ENCODE measurements at regions of chr11 and their contacts with region 1.

Region 1: DNA sequence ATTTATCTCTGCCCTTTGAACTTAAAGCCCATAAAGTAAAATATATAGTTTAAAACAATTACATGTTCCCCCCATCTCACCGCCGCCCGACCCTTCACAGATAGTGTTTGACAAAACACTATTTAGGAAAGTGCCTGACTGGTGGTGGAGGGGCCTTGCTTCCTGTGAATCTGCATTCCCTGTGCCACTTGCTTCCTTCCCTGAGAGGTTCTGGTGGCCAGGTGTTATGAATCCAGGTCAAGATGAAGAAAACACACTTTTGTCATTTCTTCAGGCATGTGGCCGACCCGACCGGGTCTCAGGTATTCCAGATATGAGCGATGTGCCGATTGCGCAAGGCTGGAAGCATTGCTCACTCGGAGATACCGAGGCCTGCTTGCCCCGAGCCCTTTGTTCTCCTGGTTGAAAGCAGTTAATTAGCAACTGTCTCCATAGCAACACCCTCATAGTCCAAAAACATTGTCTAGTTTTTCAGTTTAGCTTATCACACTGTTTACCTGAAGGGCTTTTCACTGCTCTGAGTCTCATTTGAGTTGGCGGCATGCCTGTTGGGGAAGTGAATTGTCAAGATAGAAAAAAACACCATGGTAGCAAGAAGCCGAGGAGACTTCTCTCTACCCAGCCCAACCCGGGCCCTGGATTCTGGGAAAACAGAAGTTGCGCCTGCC is 128.3 kb downstream of the TEAD1 start:
- DNase-seq: peak; percentile 54 to 82
- H3K4me3 ChIP-seq: no peak overlapping the region
- H3K27ac ChIP-seq: peak overlapping the region; percentile 46 to 55
- H3K4me1 ChIP-seq: peaks cover 0 to 6% of the 10 kb centered on the region in 2 donors
- H3K27me3 ChIP-seq: no peaks in the 10 kb centered on the region
- CTCF ChIP-seq: no peak
- POLR2A ChIP-seq: no peak

Region 2: DNA sequence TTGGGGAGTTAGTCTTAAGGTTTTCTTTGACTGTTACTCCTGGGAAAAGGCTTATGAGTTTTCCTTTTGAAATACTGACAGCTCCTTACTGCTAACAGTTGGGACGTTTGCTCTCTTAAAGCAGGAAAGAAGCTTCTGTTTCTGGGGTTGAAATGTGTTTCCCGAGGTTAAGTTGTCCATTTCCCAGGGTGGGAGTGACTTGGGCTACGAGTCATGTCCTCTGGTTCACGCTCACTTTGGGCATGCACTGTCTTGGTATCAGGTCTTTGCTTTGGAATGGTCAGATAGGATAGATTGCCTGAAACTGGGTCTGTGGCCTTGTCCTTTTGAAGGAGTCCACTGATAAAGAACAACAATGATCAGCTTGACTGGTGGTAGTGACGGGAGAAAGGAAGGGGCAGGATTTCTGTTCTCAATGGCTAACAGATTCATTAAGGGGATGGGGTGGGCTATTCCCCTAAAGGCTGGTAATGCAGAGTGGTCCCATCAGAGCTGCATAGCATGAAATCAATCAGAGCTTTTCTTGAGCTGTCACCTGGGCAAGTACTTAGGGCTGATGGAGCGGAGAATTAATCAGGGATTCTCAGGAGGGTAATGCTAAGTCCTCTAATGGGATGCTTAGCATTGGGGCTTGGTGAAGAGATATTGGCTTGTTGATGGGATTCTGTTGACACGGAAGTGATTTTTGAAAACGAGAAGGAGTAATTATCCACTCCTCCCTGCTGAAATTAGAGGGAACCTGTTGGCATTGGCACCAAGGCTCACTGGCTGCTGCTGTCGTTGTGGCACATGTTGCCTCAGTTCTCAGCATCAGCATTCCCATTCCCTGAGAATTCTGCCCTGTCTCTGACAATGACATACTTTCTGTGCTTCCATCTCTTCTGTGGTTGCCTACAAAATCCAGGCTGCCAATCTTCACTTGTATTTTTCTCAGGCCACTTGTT is 46.8 kb before region 1 on chr11:
- intact Hi-C with region 1: loop called (anchors 10 kb)
- DNase-seq: no peak
- H3K4me3 ChIP-seq: no peak overlapping the region
- H3K27ac ChIP-seq: no peak overlapping the region
- H3K4me1 ChIP-seq: peaks cover 0 to 4% of the 10 kb centered on the region in 2 donors
- H3K27me3 ChIP-seq: no peaks in the 10 kb centered on the region
- CTCF ChIP-seq: no peak
- POLR2A ChIP-seq: no peak

Region 3: GRCh38 chr11:12841946-12842630 is 39.5 kb after region 1 on chr11:
- intact Hi-C with region 1: no loop called
- DNase-seq: peak; percentile 46 to 58
- H3K4me3 ChIP-seq: no peak overlapping the region
- H3K27ac ChIP-seq: peak overlapping the region; percentile 7 to 66
- H3K4me1 ChIP-seq: peaks cover 0 to 7% of the 10 kb centered on the region in 2 donors
- H3K27me3 ChIP-seq: no peaks in the 10 kb centered on the region
- CTCF ChIP-seq: no peak
- POLR2A ChIP-seq: no peak

Region 4: GRCh38 chr11:13247606-13248296 is 445.2 kb after region 1 on chr11:
- intact Hi-C with region 1: no loop called
- DNase-seq: no peak
- H3K4me3 ChIP-seq: no peak overlapping the region
- H3K27ac ChIP-seq: no peak overlapping the region
- H3K4me1 ChIP-seq: no peaks in the 10 kb centered on the region
- H3K27me3 ChIP-seq: no peaks in the 10 kb centered on the region
- CTCF ChIP-seq: no peak
- POLR2A ChIP-seq: no peak